Activated naive CD4-positive, alpha-beta T cell treated with anti-CD3 and anti-CD28 coated beads for 36 hours (primary cell): ENCODE measurements at regions of chr10 and their contacts with region 1.

Region 1: GRCh38 chr10:96374985-96375830 is 16.4 kb upstream of the OPALIN start:
- DNase-seq: peak; percentile 89
- H3K4me3 Mint-ChIP-seq: peak overlapping the region; percentile 74
- H3K27ac Mint-ChIP-seq: no peak overlapping the region
- H3K4me1 Mint-ChIP-seq: peaks cover 6% of the 10 kb centered on the region
- H3K27me3 Mint-ChIP-seq: peaks cover 3% of the 10 kb centered on the region

Region 2: DNA sequence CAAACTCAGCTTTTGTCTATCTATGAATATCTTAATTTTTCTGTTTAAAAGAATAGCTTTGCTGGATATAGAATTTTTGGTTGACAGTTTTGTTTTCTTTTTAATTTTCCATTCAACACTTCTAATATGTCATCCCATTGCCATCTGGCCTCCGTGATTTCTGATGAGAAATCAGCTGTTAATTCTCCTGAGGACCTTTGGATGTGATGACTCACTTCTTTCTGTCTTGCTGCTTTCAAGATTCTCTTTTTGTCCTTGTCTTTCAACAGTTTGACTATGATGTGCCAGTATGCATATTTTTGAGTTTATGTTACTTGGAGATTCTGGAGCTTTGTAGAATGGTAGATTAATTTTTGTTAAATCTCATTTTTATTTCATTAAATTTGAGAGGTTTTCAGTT is 206.7 kb before region 1 on chr10:
- CTCF ChIA-PET with region 1: no interaction called
- intact Hi-C with region 1: no loop called
- DNase-seq: no peak
- H3K4me3 Mint-ChIP-seq: no peak overlapping the region
- H3K27ac Mint-ChIP-seq: no peak overlapping the region
- H3K4me1 Mint-ChIP-seq: no peaks in the 10 kb centered on the region
- H3K27me3 Mint-ChIP-seq: peaks cover 2% of the 10 kb centered on the region

Region 3: GRCh38 chr10:96513698-96514561 is 138.7 kb after region 1 on chr10 and contains the start of gene TLL2:
- CTCF ChIA-PET with region 1: interaction called, 16 read pairs
- intact Hi-C with region 1: loop called (anchors 1 kb)
- DNase-seq: peak; percentile 69
- H3K4me3 Mint-ChIP-seq: peak within 1 kb of the TSS; percentile 61
- H3K27ac Mint-ChIP-seq: no peak within 1 kb of the TSS
- H3K4me1 Mint-ChIP-seq: peaks cover 14% of the 10 kb centered on the region
- H3K27me3 Mint-ChIP-seq: peaks cover 44% of the 10 kb centered on the region
- total RNA-seq, gene TLL2: 0.07 TPM in 1 of 2 experiments, not detected in the other